ENCODE measurements at regions of chr3 and their contacts with region 1.

Region 1: GRCh38 chr3:52339612-52340011 is 23.5 kb downstream of the DNAH1 start:
- DNase-seq: peak; percentile 48
- H3K4me3 Mint-ChIP-seq: no peak overlapping the region
- H3K27ac Mint-ChIP-seq: no peak overlapping the region
- H3K4me1 Mint-ChIP-seq: peaks cover 7% of the 10 kb centered on the region
- H3K27me3 Mint-ChIP-seq: no peaks in the 10 kb centered on the region
- CTCF ChIP-seq: peak; percentile 51

Region 2: DNA sequence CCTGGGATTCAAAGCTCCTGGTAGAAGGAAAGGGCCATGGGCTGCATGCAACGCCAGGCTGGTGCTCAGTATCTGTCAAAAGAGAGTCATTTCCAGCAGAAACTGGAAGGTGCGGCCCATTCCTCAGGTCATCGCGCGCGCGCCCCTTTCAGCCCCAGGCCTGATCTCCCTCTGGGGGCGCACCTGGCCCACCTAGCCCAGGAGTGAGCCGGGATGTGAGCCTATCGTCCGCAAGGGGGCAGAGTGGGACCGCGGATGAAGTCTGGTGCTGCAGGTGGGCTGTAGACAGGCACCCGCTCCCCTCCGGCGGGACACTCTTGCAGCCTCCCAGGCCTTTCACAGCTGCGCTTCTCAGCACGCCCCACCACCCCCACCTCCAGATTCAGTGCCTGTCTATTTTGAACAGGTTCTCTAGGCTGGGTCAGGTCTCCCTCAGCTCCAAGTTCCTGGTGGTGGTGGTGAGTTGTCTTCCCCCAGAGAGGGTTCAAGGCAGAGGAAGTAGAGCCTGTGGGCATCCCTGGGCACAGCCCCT is 338.1 kb before region 1 on chr3:
- CTCF ChIA-PET with region 1: no interaction called
- intact Hi-C with region 1: loop called (anchors 5 kb)
- DNase-seq: peak; percentile 87
- H3K4me3 Mint-ChIP-seq: no peak overlapping the region
- H3K27ac Mint-ChIP-seq: no peak overlapping the region
- H3K4me1 Mint-ChIP-seq: peaks cover 38% of the 10 kb centered on the region
- H3K27me3 Mint-ChIP-seq: peaks cover 15% of the 10 kb centered on the region
- CTCF ChIP-seq: peak; percentile 98

Region 3: GRCh38 chr3:52220380-52221026 is 119.1 kb before region 1 on chr3:
- CTCF ChIA-PET with region 1: interaction called, 6 read pairs
- intact Hi-C with region 1: loop called (anchors 1 kb)
- DNase-seq: peak; percentile 88
- H3K4me3 Mint-ChIP-seq: no peak overlapping the region
- H3K27ac Mint-ChIP-seq: no peak overlapping the region
- H3K4me1 Mint-ChIP-seq: peaks cover 27% of the 10 kb centered on the region
- H3K27me3 Mint-ChIP-seq: no peaks in the 10 kb centered on the region
- CTCF ChIP-seq: peak; percentile 86

Region 4: DNA sequence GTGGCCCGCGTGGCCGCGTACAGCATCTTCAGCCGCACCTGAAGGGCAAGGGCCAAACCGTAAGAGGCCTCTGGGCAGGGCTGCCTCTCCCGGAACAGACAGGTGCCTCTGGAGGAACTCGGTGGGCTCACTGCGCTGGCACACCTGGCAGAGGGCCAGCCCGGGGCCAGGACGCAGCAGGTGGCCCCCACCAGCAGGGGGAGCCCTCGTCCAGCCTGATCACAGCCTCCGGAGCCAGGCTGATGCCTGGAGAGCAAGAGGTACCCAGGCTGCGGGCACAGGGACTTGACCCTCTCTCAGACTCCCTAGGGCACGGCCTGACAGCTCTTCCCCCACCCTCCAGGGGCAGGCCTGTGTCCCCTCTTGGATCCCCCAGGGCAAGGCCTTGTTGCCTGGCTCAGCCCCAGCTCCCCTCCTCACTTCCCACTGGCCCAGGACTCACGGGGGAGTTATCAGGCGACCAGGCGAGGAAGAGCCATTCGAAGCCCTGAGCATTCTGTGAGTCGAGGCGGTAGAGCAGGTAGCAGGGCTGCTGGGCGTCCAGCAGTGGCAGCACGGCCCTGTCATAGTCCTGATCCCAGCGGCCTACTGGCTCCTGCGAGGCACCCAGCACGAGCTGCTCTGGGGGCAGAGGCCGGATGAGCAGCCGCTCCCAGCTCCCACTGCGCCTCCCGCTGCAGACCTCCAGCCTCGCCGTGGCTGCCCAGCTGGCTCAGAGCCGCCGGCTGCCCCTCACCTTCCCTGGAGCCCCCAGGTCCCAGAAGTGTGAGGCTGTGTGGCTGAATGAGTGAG is 107.9 kb before region 1 on chr3:
- CTCF ChIA-PET with region 1: interaction called, 9 read pairs
- intact Hi-C with region 1: loop called (anchors 2 kb)
- DNase-seq: peak; percentile 94
- H3K4me3 Mint-ChIP-seq: no peak overlapping the region
- H3K27ac Mint-ChIP-seq: no peak overlapping the region
- H3K4me1 Mint-ChIP-seq: no peaks in the 10 kb centered on the region
- H3K27me3 Mint-ChIP-seq: no peaks in the 10 kb centered on the region
- CTCF ChIP-seq: peak; percentile 92

Region 5: GRCh38 chr3:52291508-52292181 is 48.0 kb before region 1 on chr3:
- CTCF ChIA-PET with region 1: interaction called, 6 read pairs
- intact Hi-C with region 1: loop called (anchors 1 kb)
- DNase-seq: peak; percentile 63
- H3K4me3 Mint-ChIP-seq: no peak overlapping the region
- H3K27ac Mint-ChIP-seq: peak overlapping the region; percentile 14
- H3K4me1 Mint-ChIP-seq: peaks cover 33% of the 10 kb centered on the region
- H3K27me3 Mint-ChIP-seq: no peaks in the 10 kb centered on the region
- CTCF ChIP-seq: peak; percentile 53